MCF 10A (cell line): ENCODE measurements at regions of chr1 and their contacts with region 1.

Region 1: DNA sequence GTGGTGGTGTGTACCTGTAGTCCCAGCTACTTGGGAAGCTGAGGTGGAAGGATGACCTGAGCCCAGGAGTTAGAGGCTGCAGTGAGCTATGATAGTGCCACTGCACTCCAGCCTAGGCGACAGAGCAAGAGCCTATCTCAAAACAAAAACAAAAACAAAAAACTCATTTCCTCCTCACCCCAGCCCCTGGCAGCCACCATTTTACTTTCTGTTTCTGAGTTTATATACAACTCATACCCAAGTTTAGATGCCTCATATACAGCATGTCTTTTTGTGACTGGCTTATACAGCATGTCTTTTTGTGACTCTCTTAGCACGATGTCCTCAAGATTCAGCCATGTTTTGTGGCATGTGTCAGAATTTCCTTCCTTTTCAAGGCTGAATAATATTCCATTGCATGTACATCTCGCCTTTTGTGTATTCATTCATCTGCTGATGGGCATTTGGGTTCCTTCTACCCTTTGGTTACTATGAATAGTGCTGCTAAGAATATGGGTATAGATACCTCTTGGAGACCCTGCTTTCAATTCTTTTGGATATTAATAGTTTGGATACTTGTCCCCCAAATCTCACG is 14.7 kb downstream of the COA7 start:
- DNase-seq: no peak
- H3K4me3 Mint-ChIP-seq: no peak overlapping the region
- H3K27ac Mint-ChIP-seq: no peak overlapping the region
- H3K4me1 Mint-ChIP-seq: peaks cover 5% of the 10 kb centered on the region
- H3K27me3 Mint-ChIP-seq: no peaks in the 10 kb centered on the region
- CTCF ChIP-seq: no peak

Region 2: DNA sequence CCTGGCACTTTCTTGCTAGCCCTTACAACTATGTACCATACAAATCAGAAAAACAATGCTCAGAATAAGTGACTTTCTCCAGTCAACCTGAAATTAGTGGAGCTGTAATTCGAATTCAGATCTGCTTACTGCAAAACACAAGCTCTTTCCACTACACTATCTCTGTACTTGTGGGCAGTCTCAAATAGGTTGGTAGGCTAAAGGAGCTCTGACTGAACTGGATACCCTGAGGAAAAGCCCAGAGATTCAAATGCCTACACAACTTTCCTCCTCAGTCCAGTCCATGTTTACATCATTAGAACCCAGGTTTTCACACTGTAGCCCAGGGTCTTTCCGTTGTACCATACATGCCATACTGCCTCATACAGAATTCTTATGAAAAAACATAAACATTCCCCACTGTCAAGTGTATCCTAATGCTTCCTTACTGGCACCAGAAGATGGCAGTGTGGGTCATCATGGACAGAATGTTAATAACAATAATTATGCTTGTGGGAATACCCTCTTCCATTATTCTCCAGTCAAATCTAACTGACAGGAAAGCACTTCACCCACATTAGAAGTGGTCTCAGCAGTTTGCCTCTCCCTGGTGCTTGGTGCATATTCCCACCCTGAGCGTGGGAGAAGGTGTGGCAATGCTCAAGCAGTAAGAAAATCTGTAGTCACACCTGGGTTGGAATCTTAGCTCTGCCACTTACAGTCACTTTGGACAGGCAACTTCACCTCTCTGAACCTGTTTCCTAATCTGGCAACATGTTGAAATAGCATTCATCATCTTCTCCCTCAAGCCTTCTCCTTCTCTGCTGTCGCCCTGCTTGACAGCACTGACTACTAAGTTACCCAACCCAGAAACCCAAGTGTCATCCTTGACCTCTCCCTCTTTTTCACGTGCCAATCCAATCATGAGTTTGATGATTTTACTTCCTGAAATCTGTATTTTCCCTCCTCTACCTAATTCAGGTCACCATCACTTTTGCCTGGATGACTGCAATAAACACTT is 556.0 kb before region 1 on chr1:
- CTCF ChIA-PET with region 1: no interaction called
- POLR2A ChIA-PET with region 1: no interaction called
- intact Hi-C with region 1: loop called (anchors 5 kb)
- DNase-seq: peak; percentile 80
- H3K4me3 Mint-ChIP-seq: no peak overlapping the region
- H3K27ac Mint-ChIP-seq: no peak overlapping the region
- H3K4me1 Mint-ChIP-seq: peaks cover 7% of the 10 kb centered on the region
- H3K27me3 Mint-ChIP-seq: peaks cover 13% of the 10 kb centered on the region
- CTCF ChIP-seq: peak; percentile 58

Region 3: DNA sequence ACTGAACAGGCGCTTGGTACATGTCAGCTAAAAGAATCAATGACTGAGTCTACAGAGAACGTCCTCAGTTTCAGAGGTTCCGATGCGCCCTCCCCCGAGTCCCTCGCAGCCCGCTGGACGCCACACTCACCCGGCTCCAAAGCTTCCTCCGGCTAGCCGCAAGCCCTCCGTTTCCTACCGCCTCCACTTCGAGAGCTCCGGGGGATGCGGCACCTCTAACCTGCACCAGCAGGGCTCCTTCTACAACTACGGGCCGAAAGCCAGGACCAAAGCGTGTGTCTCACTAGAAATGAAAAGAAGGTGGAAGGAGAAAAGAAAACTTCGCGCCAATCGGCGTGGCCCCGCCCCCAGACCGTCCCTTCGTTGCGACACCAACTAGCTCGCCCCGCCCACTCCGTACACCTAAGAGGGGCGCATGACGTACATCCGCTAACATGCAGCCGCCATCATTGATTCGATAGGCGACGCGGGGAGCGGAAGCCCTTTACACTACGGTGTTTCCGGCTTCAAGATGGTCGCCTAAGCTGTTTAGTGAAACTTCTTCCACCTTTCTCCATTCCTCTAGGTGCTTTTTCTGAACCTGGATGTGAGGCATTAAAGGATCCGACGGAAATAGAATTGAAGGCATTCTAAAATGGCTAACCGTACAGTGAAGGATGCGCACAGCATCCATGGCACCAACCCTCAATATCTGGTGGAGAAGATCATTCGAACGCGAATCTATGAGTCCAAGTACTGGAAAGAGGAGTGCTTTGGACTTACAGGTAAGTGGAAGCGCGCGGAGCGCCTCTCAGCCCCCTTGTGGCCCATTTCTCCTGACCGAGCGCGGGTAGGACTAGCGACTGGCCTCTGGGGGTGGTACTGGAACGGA is 279.1 kb before region 1 on chr1 and contains the starts of genes ORC1 and PRPF38A:
- CTCF ChIA-PET with region 1: interaction called, 4 read pairs
- POLR2A ChIA-PET with region 1: interaction called, 13 read pairs
- intact Hi-C with region 1: loop called (anchors 1 kb)
- DNase-seq: peak; percentile 98
- H3K4me3 Mint-ChIP-seq: peak within 1 kb of the TSS; percentile 100
- H3K27ac Mint-ChIP-seq: peak within 1 kb of the TSS; percentile 97
- H3K4me1 Mint-ChIP-seq: peaks cover 7% of the 10 kb centered on the region
- H3K27me3 Mint-ChIP-seq: no peaks in the 10 kb centered on the region
- CTCF ChIP-seq: peak; percentile 36
- total RNA-seq, gene ORC1: 1.8 and 2.7 TPM in 2 replicates
- total RNA-seq, gene PRPF38A: 63.8 TPM in 2 replicates

Region 4: GRCh38 chr1:52460694-52461093 is 222.8 kb before region 1 on chr1:
- CTCF ChIA-PET with region 1: interaction called, 12 read pairs
- POLR2A ChIA-PET with region 1: interaction called, 3 read pairs
- intact Hi-C with region 1: no loop called
- DNase-seq: peak; percentile 69
- H3K4me3 Mint-ChIP-seq: no peak overlapping the region
- H3K27ac Mint-ChIP-seq: no peak overlapping the region
- H3K4me1 Mint-ChIP-seq: peaks cover 7% of the 10 kb centered on the region
- H3K27me3 Mint-ChIP-seq: no peaks in the 10 kb centered on the region
- CTCF ChIP-seq: no peak

Region 5: DNA sequence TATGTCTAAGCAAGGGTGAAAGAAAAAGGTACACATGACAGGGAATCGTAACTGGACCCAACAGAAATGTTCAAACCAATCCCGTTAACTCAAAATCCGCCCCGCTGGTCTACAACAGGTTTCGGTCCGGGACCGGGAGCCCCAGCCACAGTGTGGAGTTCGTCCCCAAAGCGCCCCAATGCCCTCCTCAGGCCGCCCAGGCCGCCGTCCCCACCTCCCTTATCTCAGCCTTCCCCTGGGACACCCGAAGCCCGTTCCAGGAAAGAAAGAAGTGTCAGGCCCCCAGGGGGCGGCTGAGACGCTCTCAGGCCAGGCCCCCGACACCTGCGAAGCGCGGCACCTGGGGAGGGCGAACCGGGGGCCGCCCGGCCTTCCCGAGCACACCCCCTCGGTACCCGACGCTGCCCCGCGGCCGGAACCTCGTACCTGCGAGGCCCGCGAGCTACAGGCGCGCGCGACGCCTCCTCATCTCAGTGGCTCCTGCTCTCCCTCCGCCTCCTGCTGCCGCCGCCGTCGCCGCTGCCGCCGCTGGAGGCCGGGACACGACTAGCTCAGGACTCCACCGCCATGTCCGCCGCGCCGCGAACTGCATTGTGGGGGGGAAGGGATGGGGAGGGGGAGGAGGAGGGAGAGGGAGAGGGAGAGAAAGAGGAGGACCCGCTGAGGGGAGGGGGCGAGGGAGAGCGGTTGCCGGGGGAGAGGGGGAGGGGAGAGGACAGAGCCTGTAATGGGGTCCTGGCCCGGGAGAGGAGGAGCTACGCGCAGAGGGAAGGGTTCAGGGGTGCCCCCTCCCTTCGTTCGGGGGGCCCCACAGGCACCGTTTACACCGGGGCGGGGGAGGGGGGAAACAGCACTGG is 130.7 kb before region 1 on chr1 and contains the start of gene TUT4:
- CTCF ChIA-PET with region 1: interaction called, 3 read pairs
- POLR2A ChIA-PET with region 1: interaction called, 21 read pairs
- intact Hi-C with region 1: loop called (anchors 1 kb)
- DNase-seq: peak; percentile 79
- H3K4me3 Mint-ChIP-seq: no peak within 1 kb of the TSS
- H3K27ac Mint-ChIP-seq: peak within 1 kb of the TSS; percentile 94
- H3K4me1 Mint-ChIP-seq: peaks cover 45% of the 10 kb centered on the region
- H3K27me3 Mint-ChIP-seq: no peaks in the 10 kb centered on the region
- CTCF ChIP-seq: no peak
- total RNA-seq, gene TUT4: 83.8 and 90.7 TPM in 2 replicates

Region 6: DNA sequence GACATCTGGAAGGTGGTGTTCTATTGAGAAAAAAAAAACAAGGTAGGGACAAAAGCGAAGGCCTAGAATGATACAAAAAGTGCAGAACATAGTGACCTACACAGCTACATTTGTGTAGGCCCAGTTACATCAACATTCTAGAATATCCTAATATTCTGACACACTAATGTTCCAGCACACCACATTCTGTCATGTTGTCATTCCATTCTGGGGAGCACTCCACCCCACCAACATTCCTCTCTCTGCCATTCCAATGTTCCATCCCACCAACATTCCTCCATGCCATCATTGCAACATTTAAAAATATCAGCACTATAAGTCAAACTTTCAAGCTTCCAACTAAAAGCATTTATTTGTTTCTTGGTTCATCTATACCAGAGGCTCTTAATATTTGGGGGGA is 13.8 kb before region 1 on chr1:
- CTCF ChIA-PET with region 1: interaction called, 30 read pairs
- POLR2A ChIA-PET with region 1: interaction called, 40 read pairs
- intact Hi-C with region 1: no loop called
- DNase-seq: no peak
- H3K4me3 Mint-ChIP-seq: no peak overlapping the region
- H3K27ac Mint-ChIP-seq: peak overlapping the region; percentile 94
- H3K4me1 Mint-ChIP-seq: peaks cover 46% of the 10 kb centered on the region
- H3K27me3 Mint-ChIP-seq: no peaks in the 10 kb centered on the region
- CTCF ChIP-seq: no peak

Region 7: GRCh38 chr1:52877554-52877953 is 194.1 kb after region 1 on chr1:
- CTCF ChIA-PET with region 1: no interaction called
- POLR2A ChIA-PET with region 1: no interaction called
- intact Hi-C with region 1: no loop called
- DNase-seq: no peak
- H3K4me3 Mint-ChIP-seq: no peak overlapping the region
- H3K27ac Mint-ChIP-seq: no peak overlapping the region
- H3K4me1 Mint-ChIP-seq: no peaks in the 10 kb centered on the region
- H3K27me3 Mint-ChIP-seq: no peaks in the 10 kb centered on the region
- CTCF ChIP-seq: no peak